ENCODE measurements at regions of chr1 and their contacts with region 1.

Region 1: DNA sequence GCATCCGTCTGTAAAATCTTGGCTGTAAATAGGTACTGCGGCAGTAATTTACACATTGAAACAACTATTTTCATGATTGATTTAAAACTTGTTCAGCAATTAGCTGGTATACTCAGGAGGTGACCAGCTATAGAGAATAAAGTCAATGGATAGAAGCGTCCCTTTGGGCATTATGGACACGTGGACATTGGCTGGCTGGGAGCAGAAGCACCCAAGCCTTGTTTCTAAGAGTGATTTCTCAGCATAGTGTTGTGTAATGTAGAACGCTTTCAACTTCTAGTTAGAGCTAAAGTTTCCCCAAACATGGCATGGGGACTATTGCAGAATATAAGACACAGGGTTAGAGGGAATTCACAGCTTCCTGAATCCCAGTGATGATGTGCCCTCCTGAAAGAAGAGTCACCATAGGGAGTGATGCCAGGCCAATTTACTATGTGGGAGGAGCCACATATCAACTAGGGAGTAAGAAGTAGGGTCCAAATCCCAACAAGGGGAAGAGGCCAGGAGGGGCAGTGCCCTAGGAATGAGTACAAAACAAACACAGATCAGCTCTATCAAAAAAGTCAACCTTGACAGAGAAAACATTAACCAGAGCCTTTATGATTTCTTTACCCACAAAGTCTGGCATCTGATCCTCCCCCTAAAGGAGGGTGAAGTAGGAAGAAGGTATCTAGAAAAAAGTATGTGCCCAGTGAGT is 92.7 kb downstream of the SUSD4 start:
- DNase-seq: no peak
- H3K4me3 ChIP-seq: no peak overlapping the region
- H3K27ac ChIP-seq: no peak overlapping the region
- H3K4me1 ChIP-seq: no peaks in the 10 kb centered on the region
- H3K27me3 ChIP-seq: no peaks in the 10 kb centered on the region
- CTCF ChIP-seq: no peak

Region 2: DNA sequence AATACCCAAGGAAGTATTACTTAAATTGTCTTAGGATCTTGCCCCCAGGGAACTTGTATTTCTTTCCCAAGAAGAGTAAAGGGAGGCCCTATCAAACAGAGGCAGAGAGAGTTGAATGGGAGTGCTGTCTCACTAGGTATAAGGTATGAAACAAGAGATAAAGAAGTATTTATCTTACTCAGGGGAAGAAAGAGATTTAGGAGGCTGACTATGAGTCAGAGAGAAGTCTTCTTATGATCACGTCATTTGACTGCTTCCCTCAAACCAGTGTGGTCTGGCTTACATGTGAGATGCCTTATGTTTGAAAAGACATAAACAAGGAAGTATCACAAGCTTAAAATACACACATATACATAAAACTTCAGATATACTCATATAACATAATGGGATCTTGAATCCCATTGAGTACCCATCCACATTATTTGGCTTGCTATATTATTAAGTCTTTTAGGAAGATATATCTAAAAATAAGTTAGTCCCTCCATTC is 1559.0 kb before region 1 on chr1:
- intact Hi-C with region 1: loop called (anchors 5 kb)
- DNase-seq: no peak
- H3K4me3 ChIP-seq: no peak overlapping the region
- H3K27ac ChIP-seq: no peak overlapping the region
- H3K4me1 ChIP-seq: peaks cover 0 to 21% (median 4%) of the 10 kb centered on the region in 4 donors
- H3K27me3 ChIP-seq: no peaks in the 10 kb centered on the region
- CTCF ChIP-seq: no peak

Region 3: DNA sequence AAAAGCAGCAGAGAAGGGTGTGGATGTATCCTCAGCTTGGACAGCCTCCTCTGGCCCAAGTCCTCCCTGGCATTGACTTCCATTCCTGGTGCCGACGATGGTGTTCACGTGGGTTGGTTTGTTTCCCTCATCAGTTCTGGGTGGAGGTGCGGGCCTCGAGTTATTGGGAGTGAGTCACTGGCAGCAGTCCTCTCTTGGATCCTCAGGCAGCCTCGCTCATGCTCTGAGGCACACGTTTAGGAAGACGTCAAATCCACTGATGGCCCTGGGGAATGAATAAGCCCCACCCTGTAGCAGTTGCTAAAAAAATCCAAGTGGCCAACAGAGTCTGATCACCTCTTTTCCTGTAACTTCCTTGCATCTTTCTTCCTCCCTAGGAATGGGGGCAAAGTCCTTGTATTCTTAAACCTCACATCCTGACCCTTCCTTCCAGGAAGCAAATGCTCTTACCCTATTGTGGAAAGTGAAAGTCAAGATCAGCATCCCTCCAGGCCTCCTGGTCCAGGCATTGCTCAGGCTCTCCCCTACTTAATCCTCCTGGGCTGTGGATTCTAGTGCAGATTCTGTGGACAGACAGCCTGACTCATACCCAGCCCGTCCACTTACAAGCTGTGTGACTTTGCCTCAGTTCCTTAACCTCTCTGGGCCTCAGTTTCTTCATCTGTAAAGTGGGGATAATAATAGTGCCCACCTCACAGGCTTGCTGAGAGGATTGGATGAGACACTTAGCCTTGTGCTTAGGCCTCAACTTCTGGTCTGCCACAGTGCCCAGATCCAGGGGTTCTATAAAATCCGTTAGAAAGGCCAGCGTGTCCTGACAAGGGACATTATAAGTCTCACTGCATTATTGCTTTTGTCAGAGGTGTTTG is 239.3 kb before region 1 on chr1:
- intact Hi-C with region 1: no loop called
- DNase-seq: peak; percentile 79 to 90
- H3K4me3 ChIP-seq: no peak overlapping the region
- H3K27ac ChIP-seq: peak overlapping the region; percentile 17 to 51
- H3K4me1 ChIP-seq: peaks cover 0 to 6% (median 0%) of the 10 kb centered on the region in 4 donors
- H3K27me3 ChIP-seq: no peaks in the 10 kb centered on the region
- CTCF ChIP-seq: no peak